MCF 10A (cell line): ENCODE measurements at regions of chr4 and their contacts with region 1.

Region 1: GRCh38 chr4:89226665-89227574 is 80.7 kb downstream of the GPRIN3 start:
- DNase-seq: peak; percentile 88
- H3K4me3 Mint-ChIP-seq: no peak overlapping the region
- H3K27ac Mint-ChIP-seq: no peak overlapping the region
- H3K4me1 Mint-ChIP-seq: peaks cover 5% of the 10 kb centered on the region
- H3K27me3 Mint-ChIP-seq: no peaks in the 10 kb centered on the region
- CTCF ChIP-seq: peak; percentile 65

Region 2: DNA sequence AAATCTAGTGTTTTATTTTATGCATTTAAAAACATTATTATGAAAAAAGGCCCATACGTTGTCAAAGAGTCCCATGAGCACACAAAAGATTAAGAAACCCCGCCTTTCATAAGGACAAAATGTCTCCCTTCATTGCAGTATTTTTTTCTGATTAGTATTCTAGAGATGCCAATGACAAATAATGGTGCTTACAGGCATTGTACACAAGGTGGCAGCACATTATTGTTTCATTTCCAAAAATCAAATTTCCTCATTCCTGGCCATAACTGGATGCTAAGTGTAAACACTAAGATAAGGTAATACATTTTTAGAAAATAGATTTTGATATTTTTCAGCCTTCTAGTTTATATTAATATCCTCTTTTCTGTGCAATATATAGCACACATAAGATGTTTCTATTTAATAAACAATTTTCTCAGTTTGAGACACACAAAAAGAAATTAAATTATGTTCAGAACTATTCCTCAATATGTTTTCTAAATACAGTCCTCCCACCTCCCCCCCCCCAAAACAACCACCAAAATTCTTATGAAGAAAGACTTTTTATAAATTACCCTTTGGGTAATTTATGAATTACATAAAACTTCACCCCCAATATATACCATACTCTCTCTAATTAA is 67.9 kb before region 1 on chr4:
- CTCF ChIA-PET with region 1: interaction called, 128 read pairs
- POLR2A ChIA-PET with region 1: no interaction called
- intact Hi-C with region 1: loop called (anchors 2 kb)
- DNase-seq: peak; percentile 65
- H3K4me3 Mint-ChIP-seq: no peak overlapping the region
- H3K27ac Mint-ChIP-seq: no peak overlapping the region
- H3K4me1 Mint-ChIP-seq: peaks cover 6% of the 10 kb centered on the region
- H3K27me3 Mint-ChIP-seq: no peaks in the 10 kb centered on the region
- CTCF ChIP-seq: peak; percentile 35

Region 3: DNA sequence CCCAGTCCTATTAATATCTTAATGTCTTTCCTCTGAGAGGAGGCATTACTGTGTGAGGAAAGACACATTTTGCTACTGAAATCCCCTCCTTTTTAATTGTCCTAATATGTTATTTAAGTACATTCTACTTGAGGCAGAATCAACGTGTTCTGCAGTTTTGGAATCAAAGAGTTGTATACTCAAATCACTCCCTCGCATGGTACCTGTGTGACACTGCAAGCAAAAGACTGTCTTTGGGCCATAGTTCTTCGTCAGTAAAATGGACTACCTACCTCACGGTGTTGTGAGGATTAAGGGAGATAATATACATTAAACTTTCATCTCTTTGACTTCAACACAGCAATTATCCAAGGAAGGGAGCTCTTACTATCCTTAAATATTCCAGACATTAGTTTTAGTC is 54.1 kb before region 1 on chr4:
- CTCF ChIA-PET with region 1: interaction called, 10 read pairs
- POLR2A ChIA-PET with region 1: no interaction called
- intact Hi-C with region 1: no loop called
- DNase-seq: no peak
- H3K4me3 Mint-ChIP-seq: no peak overlapping the region
- H3K27ac Mint-ChIP-seq: peak overlapping the region; percentile 63
- H3K4me1 Mint-ChIP-seq: no peaks in the 10 kb centered on the region
- H3K27me3 Mint-ChIP-seq: no peaks in the 10 kb centered on the region
- CTCF ChIP-seq: no peak

Region 4: GRCh38 chr4:89216866-89217265 is 10.1 kb before region 1 on chr4:
- CTCF ChIA-PET with region 1: interaction called, 12 read pairs
- POLR2A ChIA-PET with region 1: no interaction called
- intact Hi-C with region 1: no loop called
- DNase-seq: no peak
- H3K4me3 Mint-ChIP-seq: no peak overlapping the region
- H3K27ac Mint-ChIP-seq: no peak overlapping the region
- H3K4me1 Mint-ChIP-seq: peaks cover 6% of the 10 kb centered on the region
- H3K27me3 Mint-ChIP-seq: no peaks in the 10 kb centered on the region
- CTCF ChIP-seq: no peak

Region 5: DNA sequence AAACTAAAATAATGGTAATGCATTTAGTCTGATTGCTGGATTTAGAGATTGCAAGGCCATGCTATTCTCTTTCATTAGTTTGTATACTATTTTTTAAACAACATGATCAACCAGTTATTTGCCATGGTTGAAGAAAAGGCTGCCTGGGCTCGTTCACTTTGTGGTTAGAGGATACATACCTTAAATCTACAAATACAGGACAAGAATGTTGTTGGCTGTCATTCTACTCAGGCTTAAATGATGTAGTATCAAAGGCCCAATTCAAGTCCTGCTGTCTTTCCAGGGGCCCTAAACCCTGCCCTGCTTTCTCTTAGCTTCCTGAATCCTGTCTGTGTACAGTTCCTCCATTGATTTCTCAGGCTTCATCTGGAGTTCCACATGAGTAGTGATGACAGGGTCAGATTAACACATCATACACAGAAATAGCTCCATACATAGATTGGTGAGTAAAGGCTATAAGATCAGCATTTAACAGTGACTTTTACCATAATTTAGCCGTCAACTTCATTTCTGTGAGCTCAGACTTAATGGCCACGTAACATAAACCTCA is 195.6 kb after region 1 on chr4:
- CTCF ChIA-PET with region 1: interaction called, 10 read pairs
- POLR2A ChIA-PET with region 1: no interaction called
- intact Hi-C with region 1: no loop called
- DNase-seq: no peak
- H3K4me3 Mint-ChIP-seq: no peak overlapping the region
- H3K27ac Mint-ChIP-seq: no peak overlapping the region
- H3K4me1 Mint-ChIP-seq: no peaks in the 10 kb centered on the region
- H3K27me3 Mint-ChIP-seq: no peaks in the 10 kb centered on the region
- CTCF ChIP-seq: no peak

Region 6: GRCh38 chr4:91111556-91111955 is 1884.6 kb after region 1 on chr4:
- CTCF ChIA-PET with region 1: no interaction called
- POLR2A ChIA-PET with region 1: no interaction called
- intact Hi-C with region 1: no loop called
- DNase-seq: no peak
- H3K4me3 Mint-ChIP-seq: no peak overlapping the region
- H3K27ac Mint-ChIP-seq: no peak overlapping the region
- H3K4me1 Mint-ChIP-seq: no peaks in the 10 kb centered on the region
- H3K27me3 Mint-ChIP-seq: no peaks in the 10 kb centered on the region
- CTCF ChIP-seq: no peak